ENCODE measurements at regions of chr7 and their contacts with region 1.

Region 1: GRCh38 chr7:95511716-95512260 is 26.0 kb downstream of the ASB4 start:
- DNase-seq: peak; percentile 73
- ATAC-seq: peak; percentile 83
- H3K4me3 Mint-ChIP-seq: no peak overlapping the region
- H3K27ac Mint-ChIP-seq: no peak overlapping the region
- H3K4me1 Mint-ChIP-seq: peaks cover 2% of the 10 kb centered on the region
- H3K27me3 Mint-ChIP-seq: peaks cover 21% of the 10 kb centered on the region

Region 2: DNA sequence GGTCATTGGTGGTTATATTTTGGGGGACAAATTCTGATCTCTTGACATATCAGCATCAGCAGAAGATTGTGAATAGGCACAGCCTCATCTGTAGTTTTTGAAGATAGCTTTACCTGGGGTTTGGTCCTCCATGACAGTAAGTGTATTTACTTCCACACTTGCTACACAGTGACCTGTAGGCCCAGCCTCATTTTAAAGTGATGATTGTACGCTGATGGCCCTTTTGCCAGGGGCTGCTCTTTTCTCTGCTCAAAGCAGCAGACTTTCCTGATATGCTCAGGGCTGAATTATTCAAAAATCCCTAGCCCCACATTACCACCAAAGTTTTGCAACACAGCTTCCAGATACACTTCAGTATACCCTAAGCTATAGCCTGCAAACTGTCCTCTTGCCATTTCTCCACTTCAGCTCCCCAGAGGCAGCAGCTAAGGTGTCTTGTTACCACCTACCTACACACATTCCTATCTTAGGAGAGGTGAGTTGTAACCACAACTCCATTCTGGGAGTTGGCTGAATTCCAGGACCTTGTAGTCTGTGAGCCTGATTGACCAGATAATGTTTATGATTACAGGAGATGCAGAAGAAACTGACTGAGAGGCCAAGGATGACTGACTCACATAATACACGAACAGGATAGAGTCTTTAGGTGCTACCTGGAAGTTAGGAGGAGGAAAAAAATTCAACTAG is 20.0 kb before region 1 on chr7:
- CTCF ChIA-PET with region 1: interaction called, 33 read pairs
- POLR2A ChIA-PET with region 1: no interaction called
- DNase-seq: no peak
- ATAC-seq: no peak
- H3K4me3 Mint-ChIP-seq: no peak overlapping the region
- H3K27ac Mint-ChIP-seq: no peak overlapping the region
- H3K4me1 Mint-ChIP-seq: no peaks in the 10 kb centered on the region
- H3K27me3 Mint-ChIP-seq: peaks cover 13% of the 10 kb centered on the region

Region 3: DNA sequence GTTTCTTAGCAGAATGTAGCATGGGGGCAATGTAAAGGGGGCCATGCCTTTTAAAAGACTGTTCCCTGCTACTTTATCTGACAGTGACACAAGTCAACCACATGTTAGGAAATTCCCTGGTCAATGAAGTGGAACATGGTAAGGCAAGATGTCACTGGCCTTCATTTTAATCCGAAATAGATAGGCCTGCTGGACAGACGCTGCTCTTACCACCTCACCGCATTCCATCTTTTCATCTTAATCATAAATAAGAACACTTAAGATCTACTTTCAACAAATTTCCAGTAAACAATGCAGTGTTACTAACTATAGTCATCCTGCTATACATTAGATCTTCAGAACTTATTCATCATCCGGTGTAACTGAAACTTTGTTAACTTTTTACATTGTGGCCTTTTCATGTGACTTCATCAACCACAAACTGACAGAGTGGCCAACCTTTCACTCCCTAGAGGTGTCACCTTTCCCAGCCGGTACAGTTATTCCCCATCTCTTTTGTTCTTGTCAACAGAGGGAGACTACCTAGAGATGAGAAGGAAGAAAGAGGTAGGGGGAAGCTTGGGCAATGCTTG is 10.4 kb before region 1 on chr7:
- CTCF ChIA-PET with region 1: interaction called, 71 read pairs
- POLR2A ChIA-PET with region 1: no interaction called
- DNase-seq: peak; percentile 50
- ATAC-seq: peak; percentile 74
- H3K4me3 Mint-ChIP-seq: peak overlapping the region; percentile 2
- H3K27ac Mint-ChIP-seq: peak overlapping the region; percentile 84
- H3K4me1 Mint-ChIP-seq: peaks cover 33% of the 10 kb centered on the region
- H3K27me3 Mint-ChIP-seq: peaks cover 11% of the 10 kb centered on the region

Region 4: GRCh38 chr7:95527033-95527775 is 15.4 kb after region 1 on chr7:
- CTCF ChIA-PET with region 1: interaction called, 41 read pairs
- POLR2A ChIA-PET with region 1: no interaction called
- DNase-seq: peak; percentile 31
- ATAC-seq: no peak
- H3K4me3 Mint-ChIP-seq: no peak overlapping the region
- H3K27ac Mint-ChIP-seq: no peak overlapping the region
- H3K4me1 Mint-ChIP-seq: no peaks in the 10 kb centered on the region
- H3K27me3 Mint-ChIP-seq: peaks cover 10% of the 10 kb centered on the region

Region 5: GRCh38 chr7:95690367-95690947 is 178.7 kb after region 1 on chr7:
- CTCF ChIA-PET with region 1: interaction called, 155 read pairs
- POLR2A ChIA-PET with region 1: interaction called, 4 read pairs
- DNase-seq: peak; percentile 33
- ATAC-seq: peak; percentile 44
- H3K4me3 Mint-ChIP-seq: no peak overlapping the region
- H3K27ac Mint-ChIP-seq: no peak overlapping the region
- H3K4me1 Mint-ChIP-seq: peaks cover 2% of the 10 kb centered on the region
- H3K27me3 Mint-ChIP-seq: no peaks in the 10 kb centered on the region

Region 6: GRCh38 chr7:95871078-95871782 is 359.4 kb after region 1 on chr7:
- CTCF ChIA-PET with region 1: interaction called, 10 read pairs
- POLR2A ChIA-PET with region 1: no interaction called
- DNase-seq: peak; percentile 25
- ATAC-seq: no peak
- H3K4me3 Mint-ChIP-seq: no peak overlapping the region
- H3K27ac Mint-ChIP-seq: no peak overlapping the region
- H3K4me1 Mint-ChIP-seq: no peaks in the 10 kb centered on the region
- H3K27me3 Mint-ChIP-seq: no peaks in the 10 kb centered on the region